ENCODE measurements at regions of chr1 and their contacts with region 1.

Region 1: GRCh38 chr1:50959913-50960844 is at the start of gene FAF1:
- DNase-seq: peak; percentile 98
- H3K4me3 ChIP-seq: peak within 1 kb of the TSS; percentile 88
- H3K27ac ChIP-seq: peak within 1 kb of the TSS; percentile 70
- H3K4me1 ChIP-seq: peaks cover 25% of the 10 kb centered on the region
- CTCF ChIP-seq: peak; percentile 46; the same call in 1 of the 2 replicates
- total RNA-seq, gene FAF1: 42.3 and 57.5 TPM in 2 replicates

Region 2: GRCh38 chr1:50412813-50413476 is 547.2 kb before region 1 on chr1:
- CTCF ChIA-PET with region 1: no interaction called
- POLR2A ChIA-PET with region 1: no interaction called
- intact Hi-C with region 1: no loop called
- DNase-seq: no peak
- H3K4me3 ChIP-seq: no peak overlapping the region
- H3K27ac ChIP-seq: no peak overlapping the region
- H3K4me1 ChIP-seq: no peaks in the 10 kb centered on the region
- CTCF ChIP-seq: no peak

Region 3: GRCh38 chr1:50774759-50775351 is 185.3 kb before region 1 on chr1:
- CTCF ChIA-PET with region 1: no interaction called
- POLR2A ChIA-PET with region 1: no interaction called
- intact Hi-C with region 1: no loop called
- DNase-seq: peak; percentile 61
- H3K4me3 ChIP-seq: no peak overlapping the region
- H3K27ac ChIP-seq: no peak overlapping the region
- H3K4me1 ChIP-seq: no peaks in the 10 kb centered on the region
- CTCF ChIP-seq: peak; percentile 92

Region 4: GRCh38 chr1:50841791-50842387 is 118.3 kb before region 1 on chr1:
- CTCF ChIA-PET with region 1: no interaction called
- POLR2A ChIA-PET with region 1: no interaction called
- intact Hi-C with region 1: no loop called
- DNase-seq: no peak
- H3K4me3 ChIP-seq: no peak overlapping the region
- H3K27ac ChIP-seq: no peak overlapping the region
- H3K4me1 ChIP-seq: no peaks in the 10 kb centered on the region
- CTCF ChIP-seq: no peak

Region 5: GRCh38 chr1:51044834-51045233 is 84.7 kb after region 1 on chr1:
- CTCF ChIA-PET with region 1: no interaction called
- POLR2A ChIA-PET with region 1: no interaction called
- intact Hi-C with region 1: no loop called
- DNase-seq: peak; percentile 49
- H3K4me3 ChIP-seq: no peak overlapping the region
- H3K27ac ChIP-seq: no peak overlapping the region
- H3K4me1 ChIP-seq: no peaks in the 10 kb centered on the region
- CTCF ChIP-seq: peak; percentile 83

Region 6: GRCh38 chr1:51878616-51879336 is 918.6 kb after region 1 on chr1 and contains the start of gene NRDC:
- CTCF ChIA-PET with region 1: no interaction called
- POLR2A ChIA-PET with region 1: no interaction called
- intact Hi-C with region 1: loop called (anchors 10 kb)
- DNase-seq: peak; percentile 100
- H3K4me3 ChIP-seq: peak within 1 kb of the TSS; percentile 88
- H3K27ac ChIP-seq: peak within 1 kb of the TSS; percentile 71
- H3K4me1 ChIP-seq: peaks cover 30% of the 10 kb centered on the region
- CTCF ChIP-seq: no peak
- total RNA-seq, gene NRDC: 48.0 TPM in 2 replicates